Esophagus squamous epithelium (tissue), 5 donors: ENCODE measurements at regions of chr9 and their contacts with region 1.

Region 1: DNA sequence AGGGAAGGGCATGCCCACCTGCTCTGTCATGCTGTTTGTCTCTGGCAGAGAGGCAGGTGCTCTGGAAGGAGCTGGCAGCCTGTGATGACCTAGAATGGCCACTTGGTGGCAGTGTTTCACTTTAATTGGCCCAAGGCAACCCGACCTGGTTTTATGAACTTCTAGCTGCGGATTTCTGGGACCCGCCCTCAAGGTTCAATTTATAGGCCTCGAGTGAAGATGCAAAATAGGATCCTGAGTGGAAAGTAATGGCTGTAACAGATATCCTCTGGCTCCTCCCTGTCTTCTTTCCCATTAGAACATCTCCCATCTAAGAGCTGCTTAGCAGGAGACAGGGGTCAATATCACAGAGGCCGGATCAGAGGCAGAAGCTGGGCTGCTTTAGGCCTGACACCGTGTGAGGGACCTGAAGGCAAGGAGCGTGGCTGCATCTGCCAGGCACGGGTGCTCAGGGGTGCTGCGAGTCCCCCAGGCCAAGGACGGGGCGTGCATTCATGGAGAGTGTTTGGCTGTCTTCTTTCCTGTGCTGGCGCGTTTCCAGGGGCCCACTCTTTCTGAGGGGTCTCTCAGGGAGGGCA is 56.7 kb upstream of the SLC28A3 start:
- DNase-seq: no peak
- H3K4me3 ChIP-seq: no peak overlapping the region
- H3K27ac ChIP-seq: no peak overlapping the region
- H3K4me1 ChIP-seq: peaks cover 0 to 11% (median 0%) of the 10 kb centered on the region in 3 donors
- H3K27me3 ChIP-seq: peaks cover 0 to 37% (median 0%) of the 10 kb centered on the region in 4 donors
- CTCF ChIP-seq: peak; percentile 71 to 95 (median 90)
- POLR2A ChIP-seq: no peak

Region 2: DNA sequence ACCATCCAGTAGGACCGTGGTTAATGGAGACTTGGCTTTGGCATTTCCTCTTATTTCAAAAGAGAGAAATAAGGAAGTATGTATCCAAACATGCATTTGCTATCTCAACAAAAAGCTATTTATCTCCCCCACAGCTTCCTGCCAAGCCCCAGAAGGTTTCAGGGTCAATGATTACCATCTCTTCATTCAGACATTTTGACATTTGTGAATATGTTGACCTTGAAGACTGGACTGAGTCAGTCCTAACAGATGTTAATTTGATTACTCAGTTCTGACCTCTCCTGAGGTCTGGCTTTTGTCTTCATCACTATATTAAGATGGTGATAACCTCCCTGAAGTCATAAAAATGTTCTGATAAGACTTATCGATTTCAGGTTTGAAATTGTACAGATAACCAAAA is 865.1 kb after region 1 on chr9:
- intact Hi-C with region 1: loop called (anchors 10 kb)
- DNase-seq: no peak
- H3K4me3 ChIP-seq: no peak overlapping the region
- H3K27ac ChIP-seq: no peak overlapping the region
- H3K4me1 ChIP-seq: peaks cover 0 to 6% (median 0%) of the 10 kb centered on the region in 3 donors
- H3K27me3 ChIP-seq: peaks cover 0 to 11% (median 0%) of the 10 kb centered on the region in 4 donors
- CTCF ChIP-seq: no peak
- POLR2A ChIP-seq: no peak

Region 3: GRCh38 chr9:85610074-85610860 is 1213.0 kb after region 1 on chr9:
- intact Hi-C with region 1: loop called (anchors 10 kb)
- DNase-seq: no peak
- H3K4me3 ChIP-seq: peak overlapping the region in 1 of 4 donors; percentile 39
- H3K27ac ChIP-seq: no peak overlapping the region
- H3K4me1 ChIP-seq: peaks cover 0 to 6% (median 0%) of the 10 kb centered on the region in 3 donors
- H3K27me3 ChIP-seq: no peaks in the 10 kb centered on the region
- CTCF ChIP-seq: peak; percentile 59 to 78 (median 72)
- POLR2A ChIP-seq: no peak